ENCODE measurements at regions of chr10 and their contacts with region 1.

Region 1: GRCh38 chr10:60099998-60100747 is 193.8 kb upstream of the CCDC6 start:
- DNase-seq: peak; percentile 9
- H3K4me3 ChIP-seq: no peak overlapping the region
- H3K27me3 ChIP-seq: no peaks in the 10 kb centered on the region
- CTCF ChIP-seq: peak; percentile 52

Region 2: GRCh38 chr10:59606551-59606961 is 493.6 kb before region 1 on chr10:
- CTCF ChIA-PET with region 1: no interaction called
- POLR2A ChIA-PET with region 1: interaction called, 11 read pairs
- DNase-seq: no peak
- H3K4me3 ChIP-seq: no peak overlapping the region
- H3K27me3 ChIP-seq: no peaks in the 10 kb centered on the region
- CTCF ChIP-seq: no peak

Region 3: GRCh38 chr10:59646150-59646549 is 454.0 kb before region 1 on chr10:
- CTCF ChIA-PET with region 1: no interaction called
- POLR2A ChIA-PET with region 1: no interaction called
- DNase-seq: no peak
- H3K4me3 ChIP-seq: no peak overlapping the region
- H3K27me3 ChIP-seq: no peaks in the 10 kb centered on the region
- CTCF ChIP-seq: no peak

Region 4: GRCh38 chr10:59885430-59886134 is 214.6 kb before region 1 on chr10:
- CTCF ChIA-PET with region 1: no interaction called
- POLR2A ChIA-PET with region 1: no interaction called
- DNase-seq: no peak
- H3K4me3 ChIP-seq: no peak overlapping the region
- H3K27me3 ChIP-seq: no peaks in the 10 kb centered on the region
- CTCF ChIP-seq: no peak

Region 5: DNA sequence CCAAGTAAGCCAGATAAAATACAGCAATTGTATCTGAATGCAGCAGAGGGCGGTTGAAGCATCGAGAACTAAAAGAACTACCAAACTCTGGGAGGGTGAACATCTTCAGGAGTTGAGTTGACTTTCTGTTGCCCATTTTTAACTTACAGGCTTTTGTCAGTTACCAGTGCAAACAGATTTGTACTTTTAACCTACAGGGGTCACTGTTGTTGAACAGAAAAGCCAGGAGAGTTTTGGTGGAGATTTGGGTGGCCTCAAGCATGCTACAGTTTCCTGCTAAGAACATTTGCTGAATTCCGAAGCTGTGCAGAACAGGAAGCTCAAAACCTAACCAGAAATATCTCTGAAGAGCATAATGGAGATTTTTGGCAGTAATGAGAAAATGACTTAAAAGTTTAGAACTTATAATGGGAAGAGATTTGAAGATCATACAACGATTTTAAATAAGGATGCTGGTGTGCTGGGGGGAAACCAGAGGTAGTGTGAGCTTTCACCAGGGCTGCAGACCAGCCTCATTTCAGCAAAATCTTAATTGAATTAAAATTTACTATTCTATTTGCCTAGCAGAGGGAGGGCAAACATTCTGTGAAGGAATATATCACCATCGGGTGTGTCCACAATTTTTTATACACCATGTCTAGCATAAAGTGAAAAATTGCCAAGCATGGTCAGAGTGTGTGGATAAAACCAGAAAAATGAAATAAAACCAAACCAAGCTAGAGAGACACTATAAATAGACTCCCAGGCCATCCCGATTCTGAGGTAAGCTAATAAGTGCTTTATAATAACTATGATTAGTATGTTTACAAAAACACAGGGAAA is 14.8 kb after region 1 on chr10:
- CTCF ChIA-PET with region 1: interaction called, 10 read pairs
- POLR2A ChIA-PET with region 1: interaction called, 3 read pairs
- DNase-seq: peak; percentile 17
- H3K4me3 ChIP-seq: no peak overlapping the region
- H3K27me3 ChIP-seq: no peaks in the 10 kb centered on the region
- CTCF ChIP-seq: peak; percentile 67